ENCODE measurements at regions of chr4 and their contacts with region 1.

Region 1: DNA sequence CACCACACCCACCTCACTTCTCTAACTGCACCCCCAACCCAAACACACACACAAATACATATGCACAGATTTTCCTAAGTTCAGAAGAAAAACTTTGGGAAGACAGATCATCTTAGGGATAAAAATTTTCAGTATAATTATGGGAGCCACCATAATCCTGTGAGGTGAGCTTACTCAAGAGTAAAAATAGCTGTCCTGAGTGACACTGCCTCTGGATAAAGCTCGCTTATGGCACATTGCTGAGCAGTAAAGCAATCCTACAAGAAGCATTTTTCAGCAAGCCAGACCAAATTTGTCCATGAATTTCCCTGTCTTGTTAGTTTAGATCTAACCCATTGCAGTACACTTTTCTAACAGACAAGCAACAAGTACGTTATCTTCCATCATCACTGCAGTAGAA is 83.8 kb downstream of the INPP4B start:
- DNase-seq: no peak
- H3K4me3 ChIP-seq: no peak overlapping the region
- H3K27ac ChIP-seq: no peak overlapping the region
- H3K4me1 ChIP-seq: no peaks in the 10 kb centered on the region
- H3K27me3 ChIP-seq: no peaks in the 10 kb centered on the region
- CTCF ChIP-seq: no peak

Region 2: DNA sequence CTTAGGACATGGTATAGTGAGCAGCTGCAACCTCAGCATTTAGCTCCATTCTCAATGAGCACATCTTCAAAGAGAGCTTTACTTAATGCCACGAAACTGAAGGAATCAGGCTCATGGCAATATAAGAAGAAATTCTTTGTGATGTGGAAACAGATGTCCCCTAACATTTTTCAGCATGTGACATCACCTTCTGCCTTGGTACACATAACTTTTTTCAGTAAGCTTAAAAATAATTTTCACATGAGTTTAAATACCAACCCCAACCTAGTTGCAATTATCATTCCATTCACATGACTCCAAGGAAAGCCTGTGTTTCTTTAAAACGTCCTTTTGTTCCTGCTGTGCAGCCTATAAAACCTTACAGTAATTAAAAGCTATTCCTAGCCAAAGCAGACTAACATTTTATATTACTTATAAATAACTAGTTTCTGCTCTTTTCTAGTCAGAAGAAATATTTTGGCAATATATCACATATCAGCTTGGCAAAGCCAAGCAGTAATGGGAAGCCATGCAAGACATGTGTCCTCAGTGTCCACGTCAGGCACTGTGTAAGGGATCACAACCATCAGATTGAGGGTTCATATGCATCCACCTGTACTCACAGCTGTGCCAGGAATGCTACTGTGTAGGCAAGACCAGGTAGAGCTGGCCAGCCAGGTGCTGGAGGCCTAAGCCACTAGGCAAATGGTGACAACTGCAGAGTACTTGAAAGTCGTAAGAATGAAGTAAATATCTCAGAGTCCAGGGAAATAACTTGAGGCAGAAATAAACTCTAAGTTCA is 382.8 kb before region 1 on chr4:
- CTCF ChIA-PET with region 1: interaction called, 13 read pairs
- dilution Hi-C with region 1: no loop called
- in situ Hi-C with region 1: no loop called
- intact Hi-C with region 1: no loop called
- DNase-seq: peak; percentile 69
- H3K4me3 ChIP-seq: no peak overlapping the region
- H3K27ac ChIP-seq: peak overlapping the region; percentile 83
- H3K4me1 ChIP-seq: peaks cover 39% of the 10 kb centered on the region
- H3K27me3 ChIP-seq: no peaks in the 10 kb centered on the region
- CTCF ChIP-seq: no peak

Region 3: DNA sequence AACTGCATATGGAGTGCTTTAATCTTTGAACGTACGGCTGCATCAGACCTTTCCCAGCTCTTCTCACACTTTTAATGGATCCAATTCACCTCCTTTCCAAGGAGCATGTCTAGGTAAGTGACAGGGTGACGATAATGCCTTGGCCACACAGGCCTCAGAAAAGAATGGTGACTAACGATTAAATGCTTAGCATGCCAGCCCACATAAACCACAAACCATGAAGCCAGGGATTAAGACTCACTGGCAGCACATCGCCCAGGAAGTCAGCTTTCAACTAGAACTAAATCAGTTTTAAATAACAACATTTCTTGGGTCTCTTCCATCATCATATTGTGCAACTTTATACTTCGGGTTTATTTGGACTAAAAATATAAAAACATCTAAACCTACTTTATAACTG is 55.2 kb after region 1 on chr4:
- CTCF ChIA-PET with region 1: no interaction called
- dilution Hi-C with region 1: no loop called
- in situ Hi-C with region 1: no loop called
- intact Hi-C with region 1: no loop called
- DNase-seq: peak; percentile 88
- H3K4me3 ChIP-seq: no peak overlapping the region
- H3K27ac ChIP-seq: peak overlapping the region; percentile 43
- H3K4me1 ChIP-seq: peaks cover 12% of the 10 kb centered on the region
- H3K27me3 ChIP-seq: no peaks in the 10 kb centered on the region
- CTCF ChIP-seq: no peak

Measured in mammary epithelial cell (primary cell).